Stomach (tissue), 19 donors: ENCODE measurements at regions of chr6 and their contacts with region 1.

Region 1: GRCh38 chr6:24589334-24589733 is 56.7 kb downstream of the KIAA0319 start:
- DNase-seq: no peak
- H3K4me3 ChIP-seq: no peak overlapping the region
- H3K27ac ChIP-seq: no peak overlapping the region
- H3K4me1 ChIP-seq: peaks cover 0 to 7% (median 4%) of the 10 kb centered on the region in 4 donors
- H3K27me3 ChIP-seq: no peaks in the 10 kb centered on the region
- CTCF ChIP-seq: no peak
- EP300 ChIP-seq: no peak
- POLR2A ChIP-seq: no peak

Region 2: DNA sequence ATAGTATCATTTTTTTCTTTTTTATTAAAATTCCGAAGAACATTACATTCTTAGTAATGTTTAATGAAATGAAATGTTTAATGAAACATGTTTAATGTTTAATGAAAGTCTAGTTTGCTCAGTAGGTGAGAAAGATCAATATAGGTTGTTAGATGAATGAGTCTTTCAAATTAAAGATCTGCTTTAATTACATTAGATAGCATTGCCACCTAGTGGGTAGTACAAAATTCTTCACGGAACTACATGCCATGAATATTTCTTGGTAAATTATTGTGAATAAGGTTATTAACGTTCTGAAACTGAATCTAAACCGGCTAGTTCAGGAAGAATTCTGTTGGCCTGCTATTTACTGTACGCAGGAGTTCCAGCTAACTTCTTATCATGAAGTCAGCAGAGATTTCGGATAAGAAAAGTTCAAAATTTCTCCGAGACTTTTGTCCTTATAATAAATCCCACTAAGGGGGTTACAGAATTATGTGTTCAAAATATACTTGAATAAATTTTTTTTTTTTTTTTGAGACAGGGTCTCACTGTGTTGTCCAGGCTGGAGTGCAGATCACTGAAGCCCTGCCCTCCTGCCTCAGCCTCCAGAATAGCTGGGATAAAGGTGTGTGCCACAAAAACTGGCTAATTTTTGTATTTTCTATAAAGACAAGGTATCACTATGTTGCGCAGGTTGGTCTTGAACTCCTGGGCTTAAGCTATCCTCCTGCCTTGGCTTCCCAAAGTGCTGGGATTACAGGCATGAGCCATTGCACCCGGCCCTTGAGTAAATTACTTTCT is 177.5 kb after region 1 on chr6:
- intact Hi-C with region 1: loop called (anchors 5 kb)
- DNase-seq: peak in 1 of 2 donors; percentile 68
- H3K4me3 ChIP-seq: no peak overlapping the region
- H3K27ac ChIP-seq: peak overlapping the region in 1 of 5 donors; percentile 12
- H3K4me1 ChIP-seq: peaks cover 7 to 31% (median 20%) of the 10 kb centered on the region in 4 donors
- H3K27me3 ChIP-seq: no peaks in the 10 kb centered on the region
- CTCF ChIP-seq: peak in 5 of 7 experiments; percentile 10 to 65 (median 48)
- EP300 ChIP-seq: no peak
- POLR2A ChIP-seq: no peak